Natural killer cell (primary cell): ENCODE measurements at regions of chr9 and their contacts with region 1.

Region 1: DNA sequence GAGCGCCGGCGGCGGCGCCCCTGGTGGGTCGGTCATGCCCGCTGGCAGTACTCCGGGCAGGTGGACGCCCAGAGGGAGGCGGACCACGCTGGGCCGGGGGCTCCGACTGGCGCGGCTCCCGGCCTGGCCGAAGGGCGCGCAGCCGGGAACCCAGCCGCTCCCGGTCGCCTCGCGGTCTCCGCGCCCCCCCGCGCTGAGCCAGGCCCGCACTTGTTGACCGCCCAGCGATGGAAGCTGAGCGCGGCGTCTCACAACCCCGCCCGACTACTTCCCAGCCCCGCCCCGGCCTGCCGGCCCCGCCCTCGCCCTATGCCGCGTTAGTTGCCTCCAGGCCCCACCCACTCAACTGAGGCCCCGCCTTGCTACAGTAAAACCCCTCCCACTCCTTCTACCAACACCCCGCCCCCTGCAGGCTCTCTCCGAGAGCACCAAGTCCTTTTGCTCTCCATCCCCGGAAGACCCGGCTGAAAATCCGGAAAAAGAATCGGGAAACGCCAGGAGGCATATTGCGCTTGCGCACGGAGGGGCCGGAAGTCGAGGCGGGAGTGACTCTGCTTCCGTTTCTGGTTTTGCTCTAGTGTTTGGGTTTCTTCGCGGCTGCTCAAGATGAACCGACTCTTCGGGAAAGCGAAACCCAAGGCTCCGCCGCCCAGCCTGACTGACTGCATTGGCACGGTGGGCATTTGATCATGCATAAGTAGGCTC is at the starts of genes BAG1 and CHMP5:
- DNase-seq: peak; percentile 97 to 99
- ATAC-seq: peak; percentile 91 to 99 (median 93)
- H3K4me3 ChIP-seq: peak within 1 kb of the TSS; percentile 96
- H3K4me3 Mint-ChIP-seq: peak within 1 kb of the TSS; percentile 84
- H3K27ac ChIP-seq: peak within 1 kb of the TSS; percentile 91
- H3K27ac Mint-ChIP-seq: peak within 1 kb of the TSS; percentile 93 to 95
- H3K4me1 ChIP-seq: peaks cover 22% of the 10 kb centered on the region
- H3K4me1 Mint-ChIP-seq: peaks cover 40 to 41% of the 10 kb centered on the region in 2 donors
- H3K27me3 ChIP-seq: no peaks in the 10 kb centered on the region
- H3K27me3 Mint-ChIP-seq: no peaks in the 10 kb centered on the region
- CTCF ChIP-seq: no peak
- total RNA-seq, gene BAG1: 83.4 to 102 (median 93.4) TPM
- total RNA-seq, gene CHMP5: 21.3 to 24.5 (median 24.0) TPM

Region 2: DNA sequence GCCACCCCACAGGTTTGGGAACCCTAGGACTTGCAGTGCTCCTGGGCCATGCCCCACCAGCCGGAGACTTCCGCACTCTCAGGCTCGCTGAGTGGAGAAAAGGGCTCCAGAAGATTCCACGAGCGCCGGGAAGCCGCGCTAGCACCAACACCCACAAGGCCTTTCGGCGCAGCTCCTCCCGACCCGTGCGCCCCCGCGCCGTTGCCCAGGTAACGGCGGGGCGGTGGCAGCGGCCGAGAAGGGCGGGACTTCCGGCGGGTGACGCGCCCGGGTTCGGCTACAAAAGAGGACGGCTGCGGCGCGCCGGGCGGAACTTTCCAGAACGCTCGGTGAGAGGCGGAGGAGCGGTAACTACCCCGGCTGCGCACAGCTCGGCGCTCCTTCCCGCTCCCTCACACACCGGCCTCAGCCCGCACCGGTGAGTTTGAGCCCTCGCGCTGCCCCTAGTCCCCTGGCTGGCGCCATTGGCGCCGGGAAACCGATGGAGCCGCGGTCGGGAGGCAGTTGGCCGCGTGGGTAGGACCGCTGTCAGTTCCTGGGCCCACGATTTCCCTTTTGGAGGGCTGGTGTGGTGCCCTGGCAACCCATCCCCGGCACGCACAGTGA is 239.6 kb before region 1 on chr9 and contains the start of gene DNAJA1:
- intact Hi-C with region 1: loop called (anchors 2 kb)
- DNase-seq: peak; percentile 97
- ATAC-seq: peak; percentile 79 to 92 (median 82)
- H3K4me3 ChIP-seq: peak within 1 kb of the TSS; percentile 96
- H3K4me3 Mint-ChIP-seq: peak within 1 kb of the TSS; percentile 92
- H3K27ac ChIP-seq: peak within 1 kb of the TSS; percentile 97
- H3K27ac Mint-ChIP-seq: peak within 1 kb of the TSS; percentile 98 to 99
- H3K4me1 ChIP-seq: peaks cover 26% of the 10 kb centered on the region
- H3K4me1 Mint-ChIP-seq: peaks cover 54 to 57% of the 10 kb centered on the region in 2 donors
- H3K27me3 ChIP-seq: no peaks in the 10 kb centered on the region
- H3K27me3 Mint-ChIP-seq: no peaks in the 10 kb centered on the region
- CTCF ChIP-seq: no peak
- total RNA-seq, gene DNAJA1: 150 to 244 (median 192) TPM

Region 3: GRCh38 chr9:33076358-33077004 is 188.1 kb before region 1 on chr9 and contains the start of gene SMU1:
- intact Hi-C with region 1: loop called (anchors 1 kb)
- DNase-seq: peak; percentile 90 to 98
- ATAC-seq: peak; percentile 94 to 99 (median 95)
- H3K4me3 ChIP-seq: peak within 1 kb of the TSS; percentile 53
- H3K4me3 Mint-ChIP-seq: peak within 1 kb of the TSS; percentile 96
- H3K27ac ChIP-seq: peak within 1 kb of the TSS; percentile 88
- H3K27ac Mint-ChIP-seq: peak within 1 kb of the TSS; percentile 93 to 99
- H3K4me1 ChIP-seq: peaks cover 17% of the 10 kb centered on the region
- H3K4me1 Mint-ChIP-seq: peaks cover 22 to 23% of the 10 kb centered on the region in 2 donors
- H3K27me3 ChIP-seq: no peaks in the 10 kb centered on the region
- H3K27me3 Mint-ChIP-seq: no peaks in the 10 kb centered on the region
- CTCF ChIP-seq: no peak
- total RNA-seq, gene SMU1: 21.9 to 23.2 (median 22.1) TPM

Region 4: DNA sequence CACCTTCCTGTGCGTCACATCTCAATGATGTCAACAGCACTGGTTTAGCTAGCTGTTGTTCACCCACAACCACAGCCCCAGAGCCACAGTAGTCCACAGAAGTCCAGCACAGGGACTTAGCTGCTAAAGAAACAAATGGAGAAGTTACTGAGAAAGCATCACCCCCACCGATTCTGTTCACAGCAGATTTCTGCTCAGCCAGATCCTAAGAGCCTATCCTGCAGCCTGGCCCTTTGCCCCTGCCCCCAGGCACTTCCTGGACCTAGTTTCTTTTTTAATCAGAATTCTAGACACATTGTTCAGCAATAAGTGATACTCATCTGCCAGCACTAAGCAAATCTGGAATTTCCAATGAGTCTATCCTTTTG is 104.9 kb before region 1 on chr9:
- intact Hi-C with region 1: loop called (anchors 5 kb)
- DNase-seq: peak; percentile 62 to 86
- ATAC-seq: peak; percentile 43 to 70 (median 61)
- H3K4me3 ChIP-seq: no peak overlapping the region
- H3K4me3 Mint-ChIP-seq: peak overlapping the region; percentile 91
- H3K27ac ChIP-seq: peak overlapping the region; percentile 94
- H3K27ac Mint-ChIP-seq: peak overlapping the region; percentile 99
- H3K4me1 ChIP-seq: peaks cover 90% of the 10 kb centered on the region
- H3K4me1 Mint-ChIP-seq: peaks cover 96% of the 10 kb centered on the region in 2 donors
- H3K27me3 ChIP-seq: no peaks in the 10 kb centered on the region
- H3K27me3 Mint-ChIP-seq: no peaks in the 10 kb centered on the region
- CTCF ChIP-seq: no peak

Region 5: DNA sequence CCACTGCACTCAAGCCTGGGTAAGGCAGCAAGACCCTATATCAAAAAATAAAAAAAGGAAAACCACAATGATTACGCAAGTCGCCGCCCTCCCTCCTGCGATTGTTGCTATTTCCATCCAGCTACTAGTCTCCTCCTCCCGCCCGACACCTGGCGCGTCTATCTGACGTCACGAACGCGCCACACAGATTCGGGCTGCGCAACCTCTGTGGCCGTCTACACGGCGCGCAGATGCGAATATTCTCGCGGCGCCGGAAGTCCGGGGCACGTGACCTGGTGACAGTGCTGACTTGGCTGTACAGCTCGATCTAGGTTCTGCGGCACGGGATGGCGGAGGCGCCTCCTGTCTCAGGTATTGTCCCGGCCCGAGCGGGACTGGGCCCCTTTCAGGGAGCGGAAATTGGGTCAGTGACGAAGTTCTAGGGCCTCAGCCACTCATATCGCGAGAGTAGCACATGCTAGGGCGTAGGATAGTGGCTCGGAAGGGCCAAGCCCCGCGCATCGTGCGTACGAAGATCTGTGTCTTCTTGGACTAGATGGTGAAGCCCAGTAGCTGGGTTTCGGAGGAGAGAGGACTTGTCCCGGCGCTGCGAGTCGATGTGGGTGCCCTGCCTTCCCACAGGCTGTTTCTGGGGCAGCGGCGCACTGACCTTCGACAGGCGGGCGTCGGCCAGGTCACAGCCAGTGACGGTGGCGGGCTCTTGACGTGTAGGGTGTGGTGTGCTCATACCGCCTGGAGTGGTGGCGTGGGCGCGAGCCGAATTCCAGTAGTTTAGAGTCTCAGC is 25.8 kb after region 1 on chr9 and contains the start of gene NFX1:
- intact Hi-C with region 1: loop called (anchors 1 kb)
- DNase-seq: peak; percentile 98 to 100
- ATAC-seq: peak; percentile 73 to 94 (median 89)
- H3K4me3 ChIP-seq: peak within 1 kb of the TSS; percentile 82
- H3K4me3 Mint-ChIP-seq: peak within 1 kb of the TSS; percentile 99
- H3K27ac ChIP-seq: peak within 1 kb of the TSS; percentile 98
- H3K27ac Mint-ChIP-seq: peak within 1 kb of the TSS; percentile 100
- H3K4me1 ChIP-seq: peaks cover 34% of the 10 kb centered on the region
- H3K4me1 Mint-ChIP-seq: peaks cover 41 to 42% of the 10 kb centered on the region in 2 donors
- H3K27me3 ChIP-seq: no peaks in the 10 kb centered on the region
- H3K27me3 Mint-ChIP-seq: peaks cover 0 to 3% of the 10 kb centered on the region in 2 donors
- CTCF ChIP-seq: no peak
- total RNA-seq, gene NFX1: 33.0 to 38.8 (median 38.5) TPM

Region 6: DNA sequence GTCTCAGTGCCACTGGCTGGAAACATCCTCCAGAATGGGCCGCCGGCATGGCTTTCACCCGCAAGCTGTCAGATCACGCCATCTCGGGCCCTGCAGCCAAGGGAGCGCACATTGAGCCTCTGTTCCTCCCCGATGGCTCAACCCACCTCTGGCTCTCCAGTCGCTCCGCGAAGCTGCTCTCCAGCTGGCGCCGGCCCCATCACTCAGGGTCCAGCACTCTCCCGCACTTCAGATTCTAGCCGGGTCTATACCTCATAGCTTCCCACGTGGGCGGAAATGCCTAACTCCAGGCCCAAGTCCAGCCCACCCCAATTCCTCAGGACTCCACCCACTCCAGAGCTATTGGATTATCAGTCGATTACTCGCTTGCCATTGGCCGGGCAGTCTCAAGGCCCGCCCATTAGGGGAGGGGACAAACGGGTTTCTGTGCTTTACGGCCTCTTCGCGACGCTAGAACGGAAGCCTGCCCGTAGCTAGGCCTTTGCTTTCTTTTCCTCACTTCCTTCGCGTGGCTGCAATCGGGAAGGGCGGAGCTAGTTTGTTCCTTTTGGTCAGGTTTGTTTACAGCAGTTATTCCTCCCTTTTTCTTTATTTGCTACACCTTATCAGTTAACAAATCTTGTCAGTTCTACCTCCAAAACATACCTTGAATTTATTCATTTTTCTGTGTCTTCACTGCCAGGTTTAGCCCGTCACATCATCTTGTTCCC is 209.2 kb after region 1 on chr9 and contains the start of gene NOL6:
- intact Hi-C with region 1: loop called (anchors 10 kb)
- DNase-seq: peak; percentile 97 to 99
- ATAC-seq: peak; percentile 98 to 100 (median 98)
- H3K4me3 ChIP-seq: peak within 1 kb of the TSS; percentile 97
- H3K4me3 Mint-ChIP-seq: peak within 1 kb of the TSS; percentile 100
- H3K27ac ChIP-seq: peak within 1 kb of the TSS; percentile 75
- H3K27ac Mint-ChIP-seq: peak within 1 kb of the TSS; percentile 93 to 96
- H3K4me1 ChIP-seq: peaks cover 15% of the 10 kb centered on the region
- H3K4me1 Mint-ChIP-seq: peaks cover 20 to 21% of the 10 kb centered on the region in 2 donors
- H3K27me3 ChIP-seq: no peaks in the 10 kb centered on the region
- H3K27me3 Mint-ChIP-seq: no peaks in the 10 kb centered on the region
- CTCF ChIP-seq: no peak
- total RNA-seq, gene NOL6: 34.2 to 42.2 (median 38.2) TPM